Right ventricle myocardium inferior (tissue), 1 donor: ENCODE measurements at regions of chr3 and their contacts with region 1.

Region 1: GRCh38 chr3:12967606-12968351 is 105.5 kb downstream of the IQSEC1 start:
- DNase-seq: peak; percentile 97
- ATAC-seq: peak; percentile 93

Region 2: GRCh38 chr3:12934431-12934830 is 33.3 kb before region 1 on chr3:
- intact Hi-C with region 1: loop called (anchors 2 kb)
- DNase-seq: no peak
- ATAC-seq: peak; percentile 46

Region 3: GRCh38 chr3:13025094-13025493 is 57.3 kb after region 1 on chr3:
- intact Hi-C with region 1: no loop called
- DNase-seq: no peak
- ATAC-seq: peak; percentile 17